Endothelial cell of umbilical vein (primary cell): ENCODE measurements at regions of chr3 and their contacts with region 1.

Region 1: GRCh38 chr3:56251343-56251945 is 216.8 kb downstream of the ERC2 start:
- DNase-seq: peak; percentile 66
- H3K4me3 ChIP-seq: no peak overlapping the region
- H3K27ac ChIP-seq: no peak overlapping the region
- H3K4me1 ChIP-seq: no peaks in the 10 kb centered on the region
- H3K27me3 ChIP-seq: no peaks in the 10 kb centered on the region
- CTCF ChIP-seq: peak; percentile 46 to 49
- POLR2A ChIP-seq: no peak

Region 2: DNA sequence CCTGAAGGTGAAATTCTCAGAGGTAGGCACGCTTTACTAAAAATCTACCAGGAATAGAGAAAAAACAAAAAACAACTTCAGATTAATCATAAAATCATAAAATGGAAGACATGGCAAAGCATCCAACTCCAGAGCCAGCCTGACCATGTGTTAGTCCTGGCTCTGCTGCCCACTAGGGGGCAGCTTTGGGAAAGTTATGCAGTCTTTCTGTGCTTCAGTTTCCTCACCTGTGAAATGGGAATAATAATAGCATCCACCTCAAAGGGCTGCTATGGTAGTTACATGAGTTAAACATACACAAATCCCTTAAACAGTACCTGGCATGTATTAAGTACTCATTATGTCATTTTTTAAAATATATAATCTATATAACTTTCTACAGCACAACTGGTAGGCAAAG is 816.7 kb before region 1 on chr3:
- CTCF ChIA-PET with region 1: interaction called, 4 read pairs
- POLR2A ChIA-PET with region 1: no interaction called
- dilution Hi-C with region 1: no loop called
- intact Hi-C with region 1: loop called (anchors 1 kb)
- DNase-seq: no peak
- H3K4me3 ChIP-seq: no peak overlapping the region
- H3K27ac ChIP-seq: no peak overlapping the region
- H3K4me1 ChIP-seq: no peaks in the 10 kb centered on the region
- H3K27me3 ChIP-seq: no peaks in the 10 kb centered on the region
- CTCF ChIP-seq: peak; percentile 40 to 46
- POLR2A ChIP-seq: no peak

Region 3: GRCh38 chr3:55746808-55747413 is 504.5 kb before region 1 on chr3:
- CTCF ChIA-PET with region 1: interaction called, 15 read pairs
- POLR2A ChIA-PET with region 1: no interaction called
- dilution Hi-C with region 1: no loop called
- intact Hi-C with region 1: loop called (anchors 2 kb)
- DNase-seq: peak; percentile 6
- H3K4me3 ChIP-seq: no peak overlapping the region
- H3K27ac ChIP-seq: no peak overlapping the region
- H3K4me1 ChIP-seq: no peaks in the 10 kb centered on the region
- H3K27me3 ChIP-seq: no peaks in the 10 kb centered on the region
- CTCF ChIP-seq: peak in 1 of 2 donors; percentile 4
- POLR2A ChIP-seq: no peak

Region 4: DNA sequence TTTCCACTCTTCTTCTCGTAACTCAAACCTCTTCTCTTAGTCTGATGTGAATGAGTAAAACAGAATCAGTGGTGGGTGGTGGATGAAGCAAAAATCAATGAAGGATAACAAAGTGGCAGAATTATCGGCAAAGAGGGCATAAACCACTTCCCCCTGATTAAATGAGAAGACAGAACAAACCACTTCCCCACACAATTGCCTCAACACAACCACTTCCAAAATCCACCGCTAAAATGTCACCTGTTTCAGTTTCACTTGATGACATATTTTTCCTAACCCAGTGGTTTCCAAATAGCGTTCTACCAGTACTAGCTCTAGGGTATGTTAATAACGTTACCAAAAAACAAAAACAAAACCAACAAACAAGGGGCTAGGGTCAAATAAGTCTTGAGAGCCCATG is 285.7 kb before region 1 on chr3:
- CTCF ChIA-PET with region 1: no interaction called
- POLR2A ChIA-PET with region 1: no interaction called
- dilution Hi-C with region 1: no loop called
- intact Hi-C with region 1: no loop called
- DNase-seq: no peak
- H3K4me3 ChIP-seq: no peak overlapping the region
- H3K27ac ChIP-seq: no peak overlapping the region
- H3K4me1 ChIP-seq: no peaks in the 10 kb centered on the region
- H3K27me3 ChIP-seq: no peaks in the 10 kb centered on the region
- CTCF ChIP-seq: no peak
- POLR2A ChIP-seq: no peak

Region 5: DNA sequence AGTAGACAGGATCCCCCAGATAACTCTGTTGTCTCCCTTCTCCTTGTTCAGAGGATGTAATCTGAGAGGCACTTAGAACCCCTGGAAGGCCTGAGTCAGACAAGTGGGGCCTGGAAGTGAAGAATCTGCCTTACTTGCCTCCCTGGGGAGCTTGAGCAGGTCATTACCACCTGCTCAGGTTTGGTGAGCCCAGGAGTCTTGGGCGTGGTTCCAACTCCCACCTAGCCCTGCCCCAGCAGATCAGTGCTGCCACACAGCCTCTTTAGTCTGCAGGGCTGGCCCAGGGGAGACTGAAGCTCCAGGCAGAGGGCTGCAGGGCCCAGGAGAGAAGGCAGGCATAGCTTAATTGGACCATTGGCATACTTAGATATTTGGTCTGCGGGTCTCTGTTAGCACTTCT is 13.1 kb before region 1 on chr3:
- CTCF ChIA-PET with region 1: interaction called, 34 read pairs
- POLR2A ChIA-PET with region 1: no interaction called
- dilution Hi-C with region 1: no loop called
- intact Hi-C with region 1: no loop called
- DNase-seq: no peak
- H3K4me3 ChIP-seq: no peak overlapping the region
- H3K27ac ChIP-seq: no peak overlapping the region
- H3K4me1 ChIP-seq: no peaks in the 10 kb centered on the region
- H3K27me3 ChIP-seq: no peaks in the 10 kb centered on the region
- CTCF ChIP-seq: no peak
- POLR2A ChIP-seq: no peak

Region 6: GRCh38 chr3:56303487-56303886 is 52.0 kb after region 1 on chr3:
- CTCF ChIA-PET with region 1: interaction called, 46 read pairs
- POLR2A ChIA-PET with region 1: no interaction called
- dilution Hi-C with region 1: no loop called
- intact Hi-C with region 1: loop called (anchors 1 kb)
- DNase-seq: peak; percentile 91
- H3K4me3 ChIP-seq: no peak overlapping the region
- H3K27ac ChIP-seq: no peak overlapping the region
- H3K4me1 ChIP-seq: peaks cover 9% of the 10 kb centered on the region
- H3K27me3 ChIP-seq: no peaks in the 10 kb centered on the region
- CTCF ChIP-seq: peak; percentile 70 to 81
- POLR2A ChIP-seq: no peak